ENCODE measurements at regions of chrX and their contacts with region 1.

Region 1: DNA sequence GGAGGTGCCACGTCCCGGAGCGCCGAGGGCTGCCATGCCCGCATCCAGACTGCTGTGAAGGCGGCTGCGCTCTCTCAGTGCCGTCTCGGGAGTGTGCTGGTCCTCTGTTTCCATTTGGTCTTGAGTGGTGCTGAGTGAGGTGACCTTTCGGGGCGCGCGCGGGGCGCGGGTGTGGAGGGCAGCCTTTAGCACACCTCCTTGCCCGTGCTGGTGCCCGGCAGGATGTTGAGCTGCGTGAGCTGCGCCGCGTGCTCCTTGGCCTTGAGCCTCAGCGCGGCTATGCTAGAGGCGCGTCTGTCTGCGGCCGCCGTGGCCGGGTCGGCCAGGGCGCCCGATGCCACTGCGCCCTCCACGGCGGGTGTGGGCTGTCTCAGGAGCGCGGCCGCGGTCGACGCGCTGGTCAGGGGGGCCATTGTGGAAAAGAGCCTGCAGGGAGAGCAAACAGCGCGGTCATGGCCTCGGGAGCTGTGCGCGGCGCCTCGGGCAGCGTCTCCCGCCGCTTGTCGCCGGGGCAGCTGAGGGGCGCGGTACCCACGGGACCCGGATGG is 11.2 kb downstream of the ARX start:
- DNase-seq: no peak
- ATAC-seq: no peak
- H3K4me3 ChIP-seq: no peak overlapping the region
- H3K4me3 Mint-ChIP-seq: peak overlapping the region in 3 of 10 donors; percentile 23 to 57 (median 35)
- H3K27ac ChIP-seq: no peak overlapping the region
- H3K27ac Mint-ChIP-seq: no peak overlapping the region
- H3K4me1 ChIP-seq: no peaks in the 10 kb centered on the region
- H3K4me1 Mint-ChIP-seq: peaks cover 6 to 19% (median 13%) of the 10 kb centered on the region in 7 donors
- H3K27me3 ChIP-seq: no peaks in the 10 kb centered on the region
- H3K27me3 Mint-ChIP-seq: peaks cover 20 to 56% (median 38%) of the 10 kb centered on the region in 5 donors

Region 2: GRCh38 chrX:24838629-24839028 is 165.9 kb before region 1 on chrX:
- CTCF ChIA-PET with region 1: no interaction called
- POLR2A ChIA-PET with region 1: no interaction called
- intact Hi-C with region 1: loop called in 1 of 2 experiments (anchors 5 kb)
- DNase-seq: peak in 4 of 9 donors; percentile 4 to 27 (median 18)
- ATAC-seq: no peak
- H3K4me3 ChIP-seq: no peak overlapping the region
- H3K4me3 Mint-ChIP-seq: no peak overlapping the region
- H3K27ac ChIP-seq: no peak overlapping the region
- H3K27ac Mint-ChIP-seq: no peak overlapping the region
- H3K4me1 ChIP-seq: no peaks in the 10 kb centered on the region
- H3K4me1 Mint-ChIP-seq: no peaks in the 10 kb centered on the region
- H3K27me3 ChIP-seq: no peaks in the 10 kb centered on the region
- H3K27me3 Mint-ChIP-seq: no peaks in the 10 kb centered on the region

Region 3: DNA sequence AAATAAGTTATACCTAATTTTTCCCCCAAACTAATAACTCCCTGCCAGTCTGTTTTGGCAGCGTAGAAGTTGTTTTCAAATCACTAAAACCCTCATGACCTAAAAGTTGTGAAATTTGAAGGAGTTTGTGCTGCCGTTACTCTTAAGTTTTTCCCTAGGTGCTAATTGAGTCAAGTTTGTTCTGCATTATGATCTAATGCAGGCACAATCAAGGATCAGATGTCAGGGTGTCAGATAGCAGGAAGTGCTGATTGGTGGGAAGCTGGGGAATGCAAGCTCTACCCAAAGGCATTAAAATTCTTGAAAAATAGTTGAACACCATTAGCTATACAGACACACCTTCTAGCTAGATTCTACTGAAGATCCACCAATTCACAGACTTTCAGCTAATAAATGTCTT is 40.7 kb before region 1 on chrX:
- CTCF ChIA-PET with region 1: no interaction called
- POLR2A ChIA-PET with region 1: no interaction called
- intact Hi-C with region 1: no loop called
- DNase-seq: no peak
- ATAC-seq: no peak
- H3K4me3 ChIP-seq: no peak overlapping the region
- H3K4me3 Mint-ChIP-seq: no peak overlapping the region
- H3K27ac ChIP-seq: no peak overlapping the region
- H3K27ac Mint-ChIP-seq: no peak overlapping the region
- H3K4me1 ChIP-seq: no peaks in the 10 kb centered on the region
- H3K4me1 Mint-ChIP-seq: no peaks in the 10 kb centered on the region
- H3K27me3 ChIP-seq: no peaks in the 10 kb centered on the region
- H3K27me3 Mint-ChIP-seq: no peaks in the 10 kb centered on the region